ENCODE measurements at regions of chr4 and their contacts with region 1.

Region 1: DNA sequence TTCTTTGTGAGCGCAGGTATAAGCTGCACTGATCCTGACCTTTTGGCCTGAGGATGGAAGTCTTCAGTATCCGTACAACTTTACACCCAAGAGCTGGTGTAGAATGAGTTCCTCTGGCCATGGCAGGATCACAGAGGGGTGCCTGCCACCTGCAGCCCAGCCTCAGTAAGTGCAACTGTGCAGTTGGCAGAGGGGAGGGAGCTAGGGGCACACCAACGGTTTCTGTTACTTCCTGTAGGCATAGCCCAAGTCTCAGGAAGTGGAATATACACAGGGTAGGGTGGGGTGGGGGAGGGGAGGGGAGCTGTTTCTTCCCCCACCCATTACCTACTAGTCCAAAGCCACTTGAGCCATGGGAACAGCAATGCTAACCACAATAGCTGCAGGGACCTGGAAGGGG is 85.4 kb upstream of the GBA3 start:
- DNase-seq: peak in 4 of 5 donors; percentile 12 to 45 (median 32)
- ATAC-seq: peak; percentile 75 to 97 (median 94)
- H3K4me3 ChIP-seq: no peak overlapping the region
- H3K27ac ChIP-seq: no peak overlapping the region
- H3K4me1 ChIP-seq: no peaks in the 10 kb centered on the region
- H3K27me3 ChIP-seq: no peaks in the 10 kb centered on the region
- CTCF ChIP-seq: peak; percentile 28 to 64 (median 48)
- POLR2A ChIP-seq: no peak

Region 2: GRCh38 chr4:22410645-22411247 is 196.6 kb before region 1 on chr4:
- intact Hi-C with region 1: loop called (anchors 1 to 5 kb)
- DNase-seq: no peak
- ATAC-seq: no peak
- H3K4me3 ChIP-seq: no peak overlapping the region
- H3K27ac ChIP-seq: no peak overlapping the region
- H3K4me1 ChIP-seq: peaks cover 0 to 4% (median 0%) of the 10 kb centered on the region in 12 donors
- H3K27me3 ChIP-seq: no peaks in the 10 kb centered on the region
- CTCF ChIP-seq: peak; percentile 33 to 71 (median 59)
- POLR2A ChIP-seq: no peak

Region 3: DNA sequence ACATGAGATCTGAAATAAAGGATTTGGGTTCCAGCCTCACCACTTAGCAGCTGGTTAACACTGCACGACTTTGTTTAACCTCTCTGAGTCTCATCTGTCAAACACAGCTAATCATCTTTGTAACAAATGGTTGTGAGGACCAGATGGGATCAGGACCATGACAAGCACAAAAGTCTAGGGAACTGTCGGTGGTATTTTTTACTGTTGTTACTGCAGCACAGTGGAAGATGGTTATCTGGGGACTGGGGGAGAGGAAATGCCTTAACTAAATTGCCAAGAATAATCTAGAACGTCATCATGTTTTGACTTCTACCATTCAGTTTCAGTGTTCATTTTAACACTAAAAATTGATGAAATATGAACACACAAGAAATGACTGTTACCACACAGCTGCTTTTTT is 191.0 kb before region 1 on chr4:
- intact Hi-C with region 1: loop called in 8 of 10 experiments (anchors 2 to 5 kb)
- DNase-seq: no peak
- ATAC-seq: no peak
- H3K4me3 ChIP-seq: no peak overlapping the region
- H3K27ac ChIP-seq: no peak overlapping the region
- H3K4me1 ChIP-seq: peaks cover 0 to 4% (median 0%) of the 10 kb centered on the region in 12 donors
- H3K27me3 ChIP-seq: no peaks in the 10 kb centered on the region
- CTCF ChIP-seq: no peak
- POLR2A ChIP-seq: no peak